ENCODE measurements at regions of chr1 and their contacts with region 1.

Region 1: DNA sequence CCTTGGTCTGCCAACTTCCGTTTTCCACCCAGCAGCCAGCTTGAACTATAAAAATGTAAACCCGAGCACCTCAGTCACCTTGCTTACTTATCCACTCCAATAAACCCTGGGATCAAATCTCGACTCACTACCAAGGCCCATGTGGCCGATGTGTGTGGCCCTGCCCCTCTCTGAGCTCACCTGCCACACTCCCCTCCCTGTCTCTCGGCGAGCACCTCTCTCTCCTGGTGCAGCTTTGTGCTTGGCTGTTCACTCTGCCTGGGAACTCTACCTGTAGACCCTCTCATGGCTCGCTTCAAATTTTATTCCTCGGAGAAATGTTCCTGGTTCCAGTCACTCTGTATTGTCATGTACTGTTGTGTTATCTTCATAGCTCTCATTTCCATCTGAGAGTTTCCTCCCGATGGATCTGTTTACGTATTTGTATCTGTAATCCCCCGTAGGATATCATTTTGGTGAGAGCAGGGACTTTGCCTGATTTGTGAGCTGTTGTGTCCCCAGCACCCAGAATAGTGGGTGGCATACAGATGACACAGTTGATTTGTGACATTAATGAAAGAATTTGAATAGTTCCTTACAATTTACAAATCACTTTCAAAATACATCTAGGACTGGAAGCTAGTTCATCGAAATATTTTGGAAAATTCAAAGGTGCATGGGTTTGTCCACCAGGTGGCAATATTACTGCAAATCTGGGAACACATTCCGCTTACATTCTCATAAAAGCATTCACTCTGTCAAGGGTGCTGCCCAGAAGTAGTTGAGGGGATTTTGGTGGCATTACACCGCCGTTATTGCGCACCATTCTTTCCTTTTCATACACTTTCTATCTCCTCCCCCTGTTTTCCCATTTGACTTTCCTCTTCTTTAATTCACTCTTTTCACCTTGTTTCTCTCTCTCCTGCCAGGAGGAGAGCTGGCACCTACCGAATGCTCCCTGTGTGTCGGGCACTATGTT is 95.3 kb downstream of the ABCA4 start:
- DNase-seq: no peak
- H3K4me3 Mint-ChIP-seq: no peak overlapping the region
- H3K27ac Mint-ChIP-seq: no peak overlapping the region
- H3K4me1 Mint-ChIP-seq: no peaks in the 10 kb centered on the region
- H3K27me3 Mint-ChIP-seq: peaks cover 39% of the 10 kb centered on the region

Region 2: DNA sequence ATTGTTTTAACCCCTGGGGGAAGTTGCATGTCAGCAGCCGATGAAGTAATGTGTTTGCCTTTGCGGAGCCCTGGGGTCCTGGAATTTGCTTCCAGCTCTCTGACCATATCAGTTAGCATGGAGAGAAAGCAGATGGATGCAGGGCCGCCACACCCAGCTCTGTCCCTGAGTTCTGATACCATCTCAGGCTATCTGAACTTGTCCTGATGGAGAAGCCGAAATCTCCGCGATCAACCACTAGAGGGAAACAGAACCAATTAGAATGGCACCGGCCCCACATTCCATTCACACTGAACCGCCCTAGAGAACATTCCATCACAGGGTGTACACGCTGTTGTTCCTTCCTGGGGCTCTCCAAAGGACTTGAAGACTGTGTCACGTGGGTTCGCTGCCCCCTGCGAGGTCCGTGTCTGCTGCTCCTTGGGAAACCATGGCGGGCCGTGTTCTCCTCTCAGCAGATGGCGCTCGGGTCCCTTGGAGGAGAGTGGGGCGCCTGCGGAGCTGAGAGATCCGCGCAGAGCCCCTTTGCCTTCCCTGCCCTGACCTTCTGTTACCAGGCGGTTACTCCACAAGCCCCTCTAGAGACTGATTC is 19.9 kb after region 1 on chr1:
- CTCF ChIA-PET with region 1: interaction called, 159 read pairs
- DNase-seq: peak; percentile 55
- H3K4me3 Mint-ChIP-seq: no peak overlapping the region
- H3K27ac Mint-ChIP-seq: no peak overlapping the region
- H3K4me1 Mint-ChIP-seq: peaks cover 6% of the 10 kb centered on the region
- H3K27me3 Mint-ChIP-seq: peaks cover 33% of the 10 kb centered on the region